HCT116 (cell line): ENCODE measurements at regions of chr7 and their contacts with region 1.

Region 1: GRCh38 chr7:5363729-5364128 is 59.9 kb downstream of the TNRC18 start:
- DNase-seq: no peak
- ATAC-seq: no peak
- H3K4me3 ChIP-seq: no peak overlapping the region
- H3K27ac ChIP-seq: no peak overlapping the region
- H3K4me1 ChIP-seq: peaks cover 0 to 6% of the 10 kb centered on the region in 2 experiments; a peak in 1 of 4 replicates
- H3K27me3 ChIP-seq: no peaks in the 10 kb centered on the region
- CTCF ChIP-seq: no peak
- POLR2A ChIP-seq: no peak
- RAD21 ChIP-seq: no peak

Region 2: GRCh38 chr7:5248201-5248885 is 115.4 kb before region 1 on chr7:
- CTCF ChIA-PET with region 1: no interaction called
- POLR2A ChIA-PET with region 1: no interaction called
- RAD21 ChIA-PET with region 1: interaction called in 1 of 2 experiments, 3 read pairs
- intact Hi-C with region 1: loop called (anchors 10 kb)
- DNase-seq: no peak
- ATAC-seq: no peak
- H3K4me3 ChIP-seq: no peak overlapping the region
- H3K27ac ChIP-seq: no peak overlapping the region
- H3K4me1 ChIP-seq: peaks cover 7 to 10% of the 10 kb centered on the region in 2 experiments
- H3K27me3 ChIP-seq: no peaks in the 10 kb centered on the region
- CTCF ChIP-seq: no peak
- POLR2A ChIP-seq: no peak
- RAD21 ChIP-seq: no peak

Region 3: DNA sequence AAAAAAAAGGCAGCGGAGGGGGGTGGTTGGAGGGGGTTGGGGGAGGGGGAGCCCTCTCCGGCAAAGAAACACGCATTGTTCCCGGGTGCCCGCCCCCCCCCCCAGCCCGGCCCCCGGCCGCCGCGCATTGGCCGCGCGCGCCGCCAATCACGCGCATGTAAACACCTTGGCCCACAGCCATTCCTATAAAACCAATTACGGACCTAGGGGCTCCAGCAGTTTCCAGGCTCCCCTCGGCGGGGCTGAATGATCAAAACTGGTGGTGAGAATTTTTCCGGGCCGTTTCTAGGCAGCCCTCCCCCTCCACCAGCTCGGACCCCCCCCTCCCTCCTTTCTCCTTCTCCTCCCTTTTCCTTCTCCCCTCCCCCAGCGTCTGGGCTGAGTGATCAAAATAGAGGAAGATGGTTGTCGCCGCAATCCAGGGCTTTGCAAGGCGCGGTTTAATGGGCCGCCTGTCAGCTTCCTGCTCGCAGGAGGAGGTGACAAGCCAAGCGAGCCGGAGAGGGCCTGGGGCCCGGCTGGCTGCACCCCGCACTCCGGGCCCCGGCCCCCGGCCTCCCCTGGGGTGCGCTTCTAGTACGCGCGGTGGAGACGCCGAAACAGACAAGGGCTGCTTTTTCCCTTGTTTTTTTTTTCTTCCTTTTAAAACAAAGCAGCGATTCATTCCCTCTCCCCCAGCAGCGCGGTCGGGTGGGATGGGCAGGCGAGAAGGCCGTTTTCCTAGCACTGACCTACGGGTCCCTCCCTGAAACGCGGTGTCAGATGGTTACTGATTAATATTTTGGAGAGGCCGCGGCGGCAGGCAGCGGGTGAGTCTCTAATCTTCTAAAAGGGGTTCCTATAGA is 60.3 kb after region 1 on chr7:
- CTCF ChIA-PET with region 1: interaction called, 4 read pairs
- POLR2A ChIA-PET with region 1: no interaction called
- RAD21 ChIA-PET with region 1: interaction called in 1 of 2 experiments, 3 read pairs
- intact Hi-C with region 1: loop called (anchors 2 kb)
- DNase-seq: peak; percentile 99
- ATAC-seq: peak; percentile 19
- H3K4me3 ChIP-seq: peak overlapping the region; percentile 83 to 91
- H3K27ac ChIP-seq: peak overlapping the region; percentile 100
- H3K4me1 ChIP-seq: peaks cover 0 to 41% of the 10 kb centered on the region in 2 experiments; a peak in 3 of 4 replicates
- H3K27me3 ChIP-seq: no peaks in the 10 kb centered on the region
- CTCF ChIP-seq: no peak
- POLR2A ChIP-seq: peak; percentile 15
- RAD21 ChIP-seq: no peak

Region 4: GRCh38 chr7:5450549-5451372 is 87.0 kb after region 1 on chr7:
- CTCF ChIA-PET with region 1: no interaction called
- POLR2A ChIA-PET with region 1: no interaction called
- RAD21 ChIA-PET with region 1: interaction called in 1 of 2 experiments, 4 read pairs
- intact Hi-C with region 1: loop called (anchors 1 kb)
- DNase-seq: no peak
- ATAC-seq: peak; percentile 83
- H3K4me3 ChIP-seq: no peak overlapping the region
- H3K27ac ChIP-seq: no peak overlapping the region
- H3K4me1 ChIP-seq: no peaks in the 10 kb centered on the region
- H3K27me3 ChIP-seq: no peaks in the 10 kb centered on the region
- CTCF ChIP-seq: peak; percentile 50 to 81 (median 66)
- POLR2A ChIP-seq: no peak
- RAD21 ChIP-seq: peak; percentile 90